MCF 10A (cell line): ENCODE measurements at regions of chr3 and their contacts with region 1.

Region 1: DNA sequence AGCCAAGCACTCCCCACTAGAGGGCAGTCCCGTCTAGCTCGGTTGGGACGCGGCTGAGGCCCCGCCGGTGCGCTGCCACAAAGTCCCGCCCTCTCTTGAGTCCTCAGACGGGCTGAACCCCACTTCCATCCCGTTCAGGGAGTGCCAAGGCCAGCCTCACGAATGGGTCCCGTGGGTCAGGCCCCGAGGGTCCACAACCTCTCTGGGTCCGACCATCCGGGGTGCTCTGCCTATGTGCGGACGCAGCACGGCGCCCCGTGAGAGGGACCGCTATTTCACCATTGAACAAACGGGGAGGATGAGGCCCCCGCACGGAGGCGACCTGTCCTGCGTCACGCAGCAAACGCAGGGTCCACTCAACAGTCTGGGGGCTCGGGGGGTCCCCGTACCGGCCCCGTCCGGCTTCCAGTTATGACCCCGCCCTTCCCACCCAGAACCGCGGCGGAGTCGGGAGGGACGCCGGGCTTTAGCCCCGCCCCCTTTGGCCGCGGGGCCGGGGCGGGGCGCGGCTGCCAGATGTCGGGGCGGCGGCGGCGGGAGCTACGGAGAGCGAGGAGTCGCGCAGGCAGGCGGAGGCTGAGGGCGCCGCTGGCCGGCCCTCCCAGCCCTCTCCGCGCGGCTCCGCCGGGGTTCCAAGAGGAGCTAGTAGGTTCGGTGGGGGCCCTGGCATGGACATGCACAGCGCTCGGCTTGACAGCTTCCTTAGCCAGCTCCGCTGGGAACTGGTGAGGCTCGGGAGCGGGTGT is at the start of gene INKA1:
- DNase-seq: peak; percentile 87
- H3K4me3 Mint-ChIP-seq: peak within 1 kb of the TSS; percentile 78
- H3K27ac Mint-ChIP-seq: peak within 1 kb of the TSS; percentile 71
- H3K4me1 Mint-ChIP-seq: peaks cover 24% of the 10 kb centered on the region
- H3K27me3 Mint-ChIP-seq: peaks cover 10% of the 10 kb centered on the region
- CTCF ChIP-seq: peak; percentile 74
- total RNA-seq, gene INKA1: 4.8 and 7.4 TPM in 2 replicates

Region 2: GRCh38 chr3:49786241-49786958 is 16.5 kb before region 1 on chr3 and contains the start of gene IP6K1:
- CTCF ChIA-PET with region 1: interaction called, 15 read pairs
- POLR2A ChIA-PET with region 1: interaction called, 33 read pairs
- intact Hi-C with region 1: loop called (anchors 2 kb)
- DNase-seq: peak; percentile 100
- H3K4me3 Mint-ChIP-seq: peak within 1 kb of the TSS; percentile 84
- H3K27ac Mint-ChIP-seq: peak within 1 kb of the TSS; percentile 97
- H3K4me1 Mint-ChIP-seq: no peaks in the 10 kb centered on the region
- H3K27me3 Mint-ChIP-seq: no peaks in the 10 kb centered on the region
- CTCF ChIP-seq: no peak
- total RNA-seq, gene IP6K1: 43.4 and 44.8 TPM in 2 replicates

Region 3: GRCh38 chr3:49899815-49900214 is 96.9 kb after region 1 on chr3:
- CTCF ChIA-PET with region 1: interaction called, 57 read pairs
- POLR2A ChIA-PET with region 1: interaction called, 16 read pairs
- intact Hi-C with region 1: loop called (anchors 1 kb)
- DNase-seq: peak; percentile 54
- H3K4me3 Mint-ChIP-seq: peak overlapping the region; percentile 71
- H3K27ac Mint-ChIP-seq: peak overlapping the region; percentile 94
- H3K4me1 Mint-ChIP-seq: peaks cover 15% of the 10 kb centered on the region
- H3K27me3 Mint-ChIP-seq: no peaks in the 10 kb centered on the region
- CTCF ChIP-seq: peak; percentile 24

Region 4: DNA sequence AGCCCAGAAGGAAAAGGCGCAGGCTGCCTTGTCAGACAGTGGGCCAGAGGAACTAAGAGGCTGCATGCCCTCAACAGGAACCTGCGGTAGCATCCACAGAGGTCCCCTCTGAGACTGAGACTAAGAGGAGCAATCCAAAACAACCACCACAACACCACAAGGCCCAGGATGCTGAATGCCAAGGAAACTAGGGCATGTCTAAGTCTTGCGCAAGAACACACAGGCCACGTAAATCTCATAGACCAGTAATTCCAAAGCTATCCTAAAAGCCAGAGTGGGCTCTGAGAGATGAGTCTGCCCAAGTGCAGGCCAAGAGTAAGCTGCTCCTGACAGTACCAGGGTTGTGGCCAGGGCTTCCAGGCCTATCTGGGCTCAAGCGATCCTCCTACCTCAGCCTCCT is 113.8 kb after region 1 on chr3:
- CTCF ChIA-PET with region 1: interaction called, 13 read pairs
- POLR2A ChIA-PET with region 1: interaction called, 8 read pairs
- intact Hi-C with region 1: no loop called
- DNase-seq: no peak
- H3K4me3 Mint-ChIP-seq: no peak overlapping the region
- H3K27ac Mint-ChIP-seq: no peak overlapping the region
- H3K4me1 Mint-ChIP-seq: no peaks in the 10 kb centered on the region
- H3K27me3 Mint-ChIP-seq: no peaks in the 10 kb centered on the region
- CTCF ChIP-seq: no peak

Region 5: GRCh38 chr3:50088725-50089608 is 286.1 kb after region 1 on chr3 and contains the start of gene RBM5:
- CTCF ChIA-PET with region 1: interaction called, 5 read pairs
- POLR2A ChIA-PET with region 1: interaction called, 9 read pairs
- intact Hi-C with region 1: loop called (anchors 5 kb)
- DNase-seq: peak; percentile 93
- H3K4me3 Mint-ChIP-seq: peak within 1 kb of the TSS; percentile 92
- H3K27ac Mint-ChIP-seq: peak within 1 kb of the TSS; percentile 99
- H3K4me1 Mint-ChIP-seq: peaks cover 10% of the 10 kb centered on the region
- H3K27me3 Mint-ChIP-seq: no peaks in the 10 kb centered on the region
- CTCF ChIP-seq: no peak
- total RNA-seq, gene RBM5: 138 TPM in 2 replicates